H1 (cell line): ENCODE measurements at regions of chr6 and their contacts with region 1.

Region 1: GRCh38 chr6:41072676-41073623 is at the start of gene NFYA:
- DNase-seq: peak; percentile 98 to 99
- H3K4me3 ChIP-seq: peak within 1 kb of the TSS; percentile 83 to 96 (median 92)
- H3K27ac ChIP-seq: peak within 1 kb of the TSS; percentile 96
- H3K4me1 ChIP-seq: peaks cover 2 to 5% (median 4%) of the 10 kb centered on the region in 4 experiments; a peak in 3 of 7 replicates
- H3K27me3 ChIP-seq: no peaks in the 10 kb centered on the region
- CTCF ChIP-seq: peak; percentile 10 to 34 (median 34)
- EP300 ChIP-seq: no peak
- POLR2A ChIP-seq: peak; percentile 21 to 82
- RAD21 ChIP-seq: no peak
- total RNA-seq, gene NFYA: 33.7 and 35.5 TPM in 2 replicates

Region 2: DNA sequence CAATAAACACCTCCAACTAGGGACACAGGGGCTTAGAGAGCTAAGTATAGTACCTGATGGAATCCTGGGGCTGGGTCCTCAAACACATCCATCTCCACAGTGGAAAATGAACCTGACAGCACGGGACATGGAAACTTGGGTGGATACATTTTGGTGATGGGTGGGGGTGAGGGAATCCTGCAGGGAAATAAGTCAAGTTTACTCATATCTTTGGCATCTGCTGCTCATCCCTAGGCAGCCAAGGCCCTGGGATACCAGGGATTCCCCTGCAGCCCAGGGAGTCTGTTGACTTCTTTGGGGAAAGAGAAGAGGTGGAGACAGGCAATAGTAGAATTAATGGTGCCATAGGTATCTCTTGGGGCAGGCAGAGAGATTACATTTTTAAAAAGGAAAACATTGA is 13.4 kb before region 1 on chr6:
- CTCF ChIA-PET with region 1: interaction called, 14 read pairs
- POLR2A ChIA-PET with region 1: interaction called, 8 read pairs
- DNase-seq: no peak
- H3K4me3 ChIP-seq: no peak overlapping the region
- H3K27ac ChIP-seq: no peak overlapping the region
- H3K4me1 ChIP-seq: no peaks in the 10 kb centered on the region; a peak in 1 of 7 replicates
- H3K27me3 ChIP-seq: no peaks in the 10 kb centered on the region
- CTCF ChIP-seq: no peak
- EP300 ChIP-seq: no peak
- POLR2A ChIP-seq: no peak
- RAD21 ChIP-seq: no peak

Region 3: GRCh38 chr6:41367700-41368099 is 294.8 kb after region 1 on chr6:
- CTCF ChIA-PET with region 1: no interaction called
- POLR2A ChIA-PET with region 1: no interaction called
- DNase-seq: peak in 1 of 2 experiments; percentile 79
- H3K4me3 ChIP-seq: no peak overlapping the region
- H3K27ac ChIP-seq: no peak overlapping the region
- H3K4me1 ChIP-seq: peaks cover 3 to 22% (median 11%) of the 10 kb centered on the region in 4 experiments
- H3K27me3 ChIP-seq: peaks cover 31 to 38% (median 38%) of the 10 kb centered on the region in 4 experiments
- CTCF ChIP-seq: peak in 2 of 3 experiments; percentile 97; a peak in 3 of 4 replicates
- EP300 ChIP-seq: no peak
- POLR2A ChIP-seq: no peak
- RAD21 ChIP-seq: peak; percentile 98 to 99